ENCODE measurements at regions of chr1 and their contacts with region 1.

Region 1: GRCh38 chr1:178575611-178576331 is 62.9 kb downstream of the TEX35 start:
- DNase-seq: no peak
- CTCF ChIP-seq: no peak

Region 2: GRCh38 chr1:178564086-178564782 is 11.5 kb before region 1 on chr1:
- CTCF ChIA-PET with region 1: interaction called, 10 read pairs
- POLR2A ChIA-PET with region 1: no interaction called
- DNase-seq: no peak
- CTCF ChIP-seq: no peak

Region 3: DNA sequence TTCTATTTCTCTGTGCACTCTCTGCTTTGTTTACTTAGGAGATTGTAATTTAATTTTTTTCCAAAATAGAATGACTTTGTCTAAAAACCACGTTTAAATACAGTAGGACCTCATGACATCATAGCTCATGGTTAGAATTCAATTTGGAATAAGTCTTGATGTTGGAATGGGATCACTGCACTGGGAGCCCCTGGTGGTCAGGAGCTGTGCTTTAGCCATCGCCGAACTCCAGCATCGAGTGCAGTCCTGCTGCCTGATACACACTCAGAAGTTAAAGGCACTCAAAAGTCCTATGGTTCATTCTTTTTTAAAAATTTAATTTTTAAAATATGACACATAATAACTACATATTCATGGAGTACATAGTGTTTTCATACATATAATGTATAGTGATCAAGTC is 12.2 kb after region 1 on chr1:
- CTCF ChIA-PET with region 1: interaction called, 14 read pairs
- POLR2A ChIA-PET with region 1: no interaction called
- DNase-seq: no peak
- CTCF ChIP-seq: no peak